ENCODE measurements at regions of chr6 and their contacts with region 1.

Region 1: DNA sequence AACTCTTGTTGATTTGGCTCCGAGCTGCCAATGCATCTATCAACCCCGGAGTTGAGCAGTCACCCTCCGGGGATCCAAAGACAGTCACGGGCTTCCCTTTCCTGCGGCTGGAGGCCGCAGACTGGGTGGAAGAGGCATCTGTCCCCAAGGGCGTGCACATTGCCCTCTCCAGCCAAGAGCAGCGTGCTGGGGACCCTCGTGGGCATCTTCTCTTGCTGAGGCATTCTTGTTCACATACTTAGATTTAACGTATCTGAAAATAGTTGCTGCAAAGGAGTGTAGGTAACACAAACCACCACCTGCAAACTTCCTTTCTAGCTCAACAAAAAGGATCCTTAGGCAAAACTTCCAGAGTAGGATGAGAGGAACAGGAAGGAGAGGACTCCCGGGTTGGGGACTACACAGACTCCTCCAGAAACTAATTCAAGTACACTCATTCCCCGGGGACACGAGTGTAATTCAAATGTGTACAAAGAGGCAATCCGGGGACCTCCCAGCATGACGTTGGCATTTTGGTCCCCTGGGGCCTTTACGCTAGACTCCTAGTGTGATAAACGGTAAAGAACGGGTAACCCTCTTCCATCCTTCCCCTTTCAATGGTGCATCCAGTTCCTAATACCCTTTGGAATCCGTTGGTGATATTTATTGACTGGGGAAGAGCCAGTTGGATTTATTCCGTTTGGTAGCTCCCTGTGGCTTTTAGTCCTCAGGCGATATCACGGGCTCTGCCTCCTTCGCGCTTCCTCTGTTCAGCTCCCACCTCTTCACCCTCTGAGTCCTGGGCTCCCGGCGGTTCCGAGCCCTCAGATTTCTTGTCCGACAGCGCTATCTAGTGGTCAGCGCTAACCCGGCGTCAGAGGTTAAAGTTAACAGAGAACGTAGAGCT is 2.7 kb upstream of the COL12A1 start:
- DNase-seq: peak; percentile 71
- H3K4me3 Mint-ChIP-seq: peak overlapping the region; percentile 66
- H3K27ac Mint-ChIP-seq: peak overlapping the region; percentile 29
- H3K4me1 Mint-ChIP-seq: peaks cover 59% of the 10 kb centered on the region
- H3K27me3 Mint-ChIP-seq: peaks cover 68% of the 10 kb centered on the region

Region 2: DNA sequence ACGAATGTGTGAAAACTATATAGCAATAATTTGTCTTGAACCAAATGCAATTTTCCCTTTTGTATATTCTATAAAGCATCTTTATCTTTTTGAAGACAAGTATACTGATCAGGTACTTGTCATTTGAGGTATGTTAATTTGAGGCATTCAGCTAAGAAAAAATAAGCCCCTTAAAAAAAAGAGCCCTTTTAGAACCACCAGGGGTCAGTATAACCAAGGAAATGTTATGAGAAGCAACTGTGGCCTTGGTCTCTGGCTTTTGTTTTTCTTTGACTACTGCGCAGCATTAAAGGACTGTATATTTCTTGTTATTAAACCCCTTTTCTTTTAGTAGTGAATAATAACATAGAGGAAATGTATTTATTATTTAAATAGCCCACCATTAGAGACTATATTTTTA is 1469.4 kb before region 1 on chr6:
- intact Hi-C with region 1: loop called (anchors 1 kb)
- DNase-seq: no peak
- H3K4me3 Mint-ChIP-seq: no peak overlapping the region
- H3K27ac Mint-ChIP-seq: no peak overlapping the region
- H3K4me1 Mint-ChIP-seq: peaks cover 13% of the 10 kb centered on the region
- H3K27me3 Mint-ChIP-seq: no peaks in the 10 kb centered on the region

Region 3: DNA sequence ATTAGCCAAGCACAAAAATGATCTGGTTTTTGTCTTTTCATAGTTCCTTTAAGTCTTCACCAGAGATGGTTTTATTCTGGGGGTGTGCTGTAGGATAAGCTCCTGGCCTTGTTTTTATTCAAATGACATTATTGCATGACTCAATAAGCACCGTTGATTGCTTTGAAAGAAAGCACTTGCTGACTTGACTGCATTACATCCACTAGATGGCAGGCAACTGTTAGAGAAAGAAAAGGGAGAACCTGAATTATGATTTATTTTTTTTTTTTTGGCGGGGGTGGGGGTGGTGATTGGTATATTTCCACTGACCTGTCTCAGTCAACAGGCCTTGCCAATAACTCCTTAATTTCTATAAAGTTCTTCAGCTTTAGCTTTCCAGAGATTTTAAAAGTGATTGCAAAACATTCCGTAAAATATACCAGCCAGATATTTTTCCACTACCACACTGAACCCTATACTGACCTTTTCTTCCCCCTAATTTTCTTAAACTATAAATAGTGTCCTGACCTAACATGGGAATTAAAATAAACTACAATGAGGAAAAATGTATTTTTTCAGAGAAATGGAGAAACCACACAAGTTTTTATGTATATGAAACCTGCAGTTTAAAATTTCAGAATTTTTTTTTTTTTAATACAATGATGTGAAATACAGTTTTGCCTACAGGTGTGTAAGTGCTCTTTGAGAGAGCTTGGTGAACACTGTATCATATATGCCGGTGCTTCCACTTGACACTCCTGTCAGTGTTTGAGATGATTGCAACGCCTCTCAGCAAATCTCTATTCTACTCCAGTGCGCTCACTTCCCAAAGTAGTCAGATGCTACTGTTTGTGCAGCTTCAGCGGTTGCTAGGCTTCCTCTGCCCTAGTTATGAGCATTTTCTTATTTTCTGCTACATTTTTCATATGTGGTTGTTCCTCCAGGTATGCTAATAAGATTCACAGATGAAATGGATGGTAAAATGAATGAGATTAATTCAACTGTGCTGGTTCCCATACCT is 1238.3 kb before region 1 on chr6:
- intact Hi-C with region 1: loop called (anchors 1 kb)
- DNase-seq: no peak
- H3K4me3 Mint-ChIP-seq: no peak overlapping the region
- H3K27ac Mint-ChIP-seq: no peak overlapping the region
- H3K4me1 Mint-ChIP-seq: no peaks in the 10 kb centered on the region
- H3K27me3 Mint-ChIP-seq: no peaks in the 10 kb centered on the region

Region 4: DNA sequence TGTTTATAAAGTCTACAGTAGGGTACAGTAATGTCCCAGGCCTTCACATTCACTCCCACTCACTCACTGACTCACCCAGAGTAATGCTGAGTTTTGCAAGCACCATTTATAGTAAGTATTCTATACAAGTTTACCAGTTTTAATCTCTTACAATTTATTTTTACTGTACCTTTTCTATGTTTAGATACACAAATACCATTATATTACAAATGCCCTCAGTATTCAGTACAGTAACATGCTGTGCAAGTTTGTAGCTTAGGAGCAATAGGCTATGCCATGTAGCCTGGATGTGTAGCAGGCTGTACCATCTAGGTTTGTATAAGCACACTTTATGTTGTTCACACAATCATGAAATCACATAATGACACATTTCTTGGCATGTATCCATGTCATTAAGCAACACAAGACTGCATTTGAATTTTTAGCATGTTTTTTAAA is 839.0 kb before region 1 on chr6:
- intact Hi-C with region 1: loop called (anchors 10 kb)
- DNase-seq: no peak
- H3K4me3 Mint-ChIP-seq: no peak overlapping the region
- H3K27ac Mint-ChIP-seq: no peak overlapping the region
- H3K4me1 Mint-ChIP-seq: no peaks in the 10 kb centered on the region
- H3K27me3 Mint-ChIP-seq: no peaks in the 10 kb centered on the region

Region 5: DNA sequence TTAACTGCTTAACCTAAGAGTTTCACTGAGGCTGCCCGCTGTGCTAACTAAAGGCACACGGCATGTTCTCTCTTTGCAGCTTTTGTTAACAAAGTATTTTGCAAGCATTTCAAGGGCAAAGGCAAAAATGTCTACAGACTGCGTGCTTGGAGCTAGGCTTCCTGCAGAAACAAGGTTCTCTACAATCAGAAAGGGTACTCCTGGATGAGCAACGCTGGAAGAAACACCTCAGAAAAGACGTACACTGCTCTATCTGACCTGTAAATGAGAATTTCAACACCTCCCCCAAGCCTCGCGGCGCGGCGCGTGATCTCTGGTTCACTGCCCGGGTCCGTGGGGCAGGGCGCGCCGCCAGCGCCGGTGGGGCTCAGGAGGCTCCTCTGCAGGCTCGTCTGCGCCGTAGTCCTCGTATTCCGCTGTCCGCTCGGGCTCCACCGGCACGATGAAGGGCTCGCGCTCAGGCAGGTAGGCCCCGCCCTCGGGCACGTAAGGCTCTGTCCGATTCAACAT is 123.6 kb before region 1 on chr6:
- intact Hi-C with region 1: loop called (anchors 2 kb)
- DNase-seq: no peak
- H3K4me3 Mint-ChIP-seq: no peak overlapping the region
- H3K27ac Mint-ChIP-seq: no peak overlapping the region
- H3K4me1 Mint-ChIP-seq: no peaks in the 10 kb centered on the region
- H3K27me3 Mint-ChIP-seq: peaks cover 16% of the 10 kb centered on the region